ENCODE measurements at regions of chr13 and their contacts with region 1.

Region 1: DNA sequence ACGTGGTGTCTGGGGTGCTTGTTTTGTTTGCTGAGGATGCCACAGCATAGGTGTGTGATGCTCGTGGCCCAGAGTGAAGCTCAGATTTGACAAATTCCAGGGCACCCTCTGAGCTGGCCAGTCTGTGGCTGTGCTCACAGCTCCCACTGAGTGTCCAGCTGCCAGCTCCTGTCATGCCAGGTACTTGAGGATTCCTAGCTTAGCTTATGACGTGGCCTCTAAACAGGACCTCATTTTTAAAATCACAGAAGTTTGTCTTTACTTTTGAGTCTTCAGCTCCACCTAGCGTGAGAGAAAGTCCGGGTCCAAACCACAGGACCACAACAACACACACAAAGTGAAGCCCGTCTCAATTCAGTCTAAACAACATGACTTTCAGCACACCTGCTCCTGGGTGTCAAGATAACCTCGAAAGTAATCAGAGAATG is 117.3 kb downstream of the RAB20 start:
- DNase-seq: peak; percentile 29 to 65
- H3K4me3 ChIP-seq: no peak overlapping the region
- H3K27ac ChIP-seq: no peak overlapping the region
- H3K4me1 ChIP-seq: peaks cover 77% of the 10 kb centered on the region
- H3K27me3 ChIP-seq: no peaks in the 10 kb centered on the region
- CTCF ChIP-seq: peak; percentile 45; the same call in 1 of the 2 replicates

Region 2: GRCh38 chr13:108915634-108916512 is 1528.4 kb before region 1 on chr13:
- CTCF ChIA-PET with region 1: interaction called, 3 read pairs
- POLR2A ChIA-PET with region 1: interaction called, 8 read pairs
- intact Hi-C with region 1: loop called (anchors 10 kb)
- DNase-seq: peak; percentile 81 to 96
- H3K4me3 ChIP-seq: peak overlapping the region; percentile 47
- H3K27ac ChIP-seq: peak overlapping the region; percentile 96
- H3K4me1 ChIP-seq: peaks cover 56% of the 10 kb centered on the region
- H3K27me3 ChIP-seq: no peaks in the 10 kb centered on the region
- CTCF ChIP-seq: no peak

Region 3: GRCh38 chr13:109869312-109870237 is 574.7 kb before region 1 on chr13:
- CTCF ChIA-PET with region 1: no interaction called
- POLR2A ChIA-PET with region 1: no interaction called
- intact Hi-C with region 1: loop called (anchors 10 kb)
- DNase-seq: peak; percentile 82
- H3K4me3 ChIP-seq: peak overlapping the region; percentile 54; the same call in 1 of the 2 replicates
- H3K27ac ChIP-seq: peak overlapping the region; percentile 79
- H3K4me1 ChIP-seq: peaks cover 82% of the 10 kb centered on the region
- H3K27me3 ChIP-seq: no peaks in the 10 kb centered on the region
- CTCF ChIP-seq: peak; percentile 40; the same call in 1 of the 2 replicates

Region 4: DNA sequence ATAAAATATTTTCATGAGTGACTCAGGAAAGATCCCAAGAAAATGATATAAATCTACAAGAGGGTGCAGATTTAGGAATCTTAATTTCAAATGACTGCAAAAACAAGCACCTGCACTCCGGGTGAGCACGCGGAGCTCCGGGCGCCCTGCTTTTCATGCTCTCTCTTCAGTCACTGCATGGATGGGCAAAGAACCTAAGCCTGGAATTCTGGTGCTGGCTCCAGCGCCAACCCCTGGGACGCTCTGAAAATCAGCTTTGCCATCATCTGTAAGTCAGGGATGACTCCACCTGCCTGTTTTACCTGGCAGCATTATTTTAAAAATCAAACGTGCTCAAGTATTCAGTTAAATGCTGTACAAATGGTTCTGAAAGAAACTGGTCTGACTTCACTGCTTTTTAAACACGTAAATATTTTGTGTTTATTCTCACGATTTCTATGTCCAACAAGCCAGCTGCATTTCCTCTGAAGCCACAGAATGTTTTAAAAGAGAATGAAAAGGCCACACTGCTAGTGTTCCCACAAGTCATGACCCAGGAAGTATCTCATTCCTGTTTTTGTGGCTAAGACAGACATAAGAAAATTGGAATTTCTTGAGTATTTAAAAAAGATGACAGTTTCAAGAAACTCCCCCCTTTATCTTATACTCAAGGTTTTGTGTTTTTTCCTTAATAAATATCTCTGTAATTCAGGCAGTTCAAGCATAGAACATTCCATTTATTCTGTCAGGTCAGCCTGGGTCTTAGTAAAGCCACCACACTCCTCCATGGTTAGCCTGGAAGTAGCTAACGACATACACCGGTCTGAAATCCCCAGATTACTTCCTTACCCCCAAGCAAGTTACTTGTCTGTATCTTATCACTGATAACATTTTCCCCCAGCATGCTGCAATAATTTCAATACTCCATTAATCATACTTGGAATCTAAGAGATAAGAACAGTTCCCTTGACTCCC is 218.4 kb before region 1 on chr13:
- CTCF ChIA-PET with region 1: interaction called, 5 read pairs
- POLR2A ChIA-PET with region 1: no interaction called
- intact Hi-C with region 1: loop called (anchors 1 kb)
- DNase-seq: peak in 1 of 2 experiments; percentile 94
- H3K4me3 ChIP-seq: no peak overlapping the region
- H3K27ac ChIP-seq: peak overlapping the region; percentile 60
- H3K4me1 ChIP-seq: peaks cover 29% of the 10 kb centered on the region
- H3K27me3 ChIP-seq: no peaks in the 10 kb centered on the region
- CTCF ChIP-seq: no peak

Region 5: GRCh38 chr13:110506859-110507566 is 62.8 kb after region 1 on chr13:
- CTCF ChIA-PET with region 1: no interaction called
- POLR2A ChIA-PET with region 1: no interaction called
- intact Hi-C with region 1: loop called (anchors 1 kb)
- DNase-seq: peak; percentile 77 to 93
- H3K4me3 ChIP-seq: peak overlapping the region; percentile 36; the same call in 1 of the 2 replicates
- H3K27ac ChIP-seq: peak overlapping the region; percentile 84
- H3K4me1 ChIP-seq: peaks cover 27% of the 10 kb centered on the region
- H3K27me3 ChIP-seq: no peaks in the 10 kb centered on the region
- CTCF ChIP-seq: no peak

Region 6: DNA sequence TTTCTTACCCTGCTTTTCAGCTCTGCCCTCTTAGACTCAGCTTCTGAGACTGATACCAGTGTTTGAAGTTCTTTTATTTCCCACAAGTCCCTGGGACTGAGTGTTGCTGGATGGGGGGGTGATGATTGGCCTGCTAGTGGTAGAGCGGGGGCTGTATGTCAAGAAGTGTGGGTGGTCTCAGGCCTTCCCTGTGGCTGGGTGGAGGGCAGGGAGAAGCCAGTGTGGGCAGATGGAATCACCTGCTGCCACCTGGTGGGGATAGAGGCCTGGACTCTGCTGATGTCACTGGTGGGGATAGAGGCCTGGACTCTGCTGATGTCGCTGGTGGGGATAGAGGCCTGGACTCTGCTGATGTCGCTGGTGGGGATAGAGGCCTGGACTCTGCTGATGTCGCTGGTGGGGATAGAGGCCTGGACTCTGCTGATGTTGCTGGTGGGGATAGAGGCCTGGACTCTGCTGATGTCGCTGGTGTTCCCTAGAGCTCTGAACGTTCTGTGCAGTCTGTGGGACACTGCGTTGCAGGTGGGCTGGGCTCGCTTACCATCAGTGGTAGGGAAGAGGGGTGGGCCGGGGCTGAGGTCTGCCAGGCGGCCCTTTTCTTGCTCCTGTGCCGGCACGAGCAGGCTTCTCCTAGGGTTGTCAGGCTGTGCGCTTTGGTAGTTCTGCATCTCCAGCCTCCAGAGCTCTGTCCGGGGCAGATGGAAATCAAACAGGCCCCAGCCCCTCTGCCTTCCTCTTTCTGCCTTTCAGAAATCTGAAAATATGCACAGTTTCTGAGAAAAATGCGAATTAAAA is 772.1 kb after region 1 on chr13:
- CTCF ChIA-PET with region 1: interaction called, 13 read pairs
- POLR2A ChIA-PET with region 1: no interaction called
- intact Hi-C with region 1: no loop called
- DNase-seq: peak in 1 of 2 experiments; percentile 26
- H3K4me3 ChIP-seq: no peak overlapping the region
- H3K27ac ChIP-seq: no peak overlapping the region
- H3K4me1 ChIP-seq: no peaks in the 10 kb centered on the region
- H3K27me3 ChIP-seq: no peaks in the 10 kb centered on the region
- CTCF ChIP-seq: peak; percentile 67; the same call in 1 of the 2 replicates

Region 7: DNA sequence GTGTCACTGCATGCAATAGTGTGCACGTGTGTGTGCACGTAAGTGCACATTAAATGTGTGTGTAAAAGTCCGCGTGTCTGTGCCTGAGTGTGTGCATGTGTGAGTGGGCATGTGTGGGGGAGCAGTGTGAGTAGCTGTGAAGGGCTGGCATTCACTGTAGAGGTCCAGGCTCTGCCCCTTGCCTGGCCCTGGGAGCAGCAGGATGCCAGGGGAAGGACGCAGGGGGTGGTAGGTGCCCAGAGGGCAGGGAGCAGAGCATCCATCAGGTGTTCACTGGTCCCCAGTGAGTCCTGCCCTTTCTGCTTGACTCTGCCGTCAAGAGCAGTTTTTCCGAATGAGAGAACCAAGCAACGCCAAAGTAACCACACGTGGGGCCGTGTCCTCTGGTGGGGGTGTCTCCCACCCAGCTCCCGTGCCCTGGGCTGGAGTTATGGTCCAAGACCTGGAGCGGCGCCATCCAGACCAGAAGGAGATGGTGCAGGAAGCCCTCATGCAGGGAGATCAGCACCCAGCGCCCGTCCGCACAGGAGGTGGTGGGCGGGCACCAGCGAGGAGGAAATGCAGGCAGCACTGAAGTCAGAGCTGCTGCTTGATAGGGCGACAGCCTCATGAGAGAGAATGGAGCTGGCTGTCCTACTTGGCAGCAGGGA is 944.7 kb after region 1 on chr13:
- CTCF ChIA-PET with region 1: no interaction called
- POLR2A ChIA-PET with region 1: no interaction called
- intact Hi-C with region 1: no loop called
- DNase-seq: no peak
- H3K4me3 ChIP-seq: no peak overlapping the region
- H3K27ac ChIP-seq: no peak overlapping the region
- H3K4me1 ChIP-seq: no peaks in the 10 kb centered on the region
- H3K27me3 ChIP-seq: peaks cover 96% of the 10 kb centered on the region
- CTCF ChIP-seq: no peak

Measured in PC-9 (cell line).